GM12878 (cell line): ENCODE measurements at regions of chr14 and their contacts with region 1.

Region 1: DNA sequence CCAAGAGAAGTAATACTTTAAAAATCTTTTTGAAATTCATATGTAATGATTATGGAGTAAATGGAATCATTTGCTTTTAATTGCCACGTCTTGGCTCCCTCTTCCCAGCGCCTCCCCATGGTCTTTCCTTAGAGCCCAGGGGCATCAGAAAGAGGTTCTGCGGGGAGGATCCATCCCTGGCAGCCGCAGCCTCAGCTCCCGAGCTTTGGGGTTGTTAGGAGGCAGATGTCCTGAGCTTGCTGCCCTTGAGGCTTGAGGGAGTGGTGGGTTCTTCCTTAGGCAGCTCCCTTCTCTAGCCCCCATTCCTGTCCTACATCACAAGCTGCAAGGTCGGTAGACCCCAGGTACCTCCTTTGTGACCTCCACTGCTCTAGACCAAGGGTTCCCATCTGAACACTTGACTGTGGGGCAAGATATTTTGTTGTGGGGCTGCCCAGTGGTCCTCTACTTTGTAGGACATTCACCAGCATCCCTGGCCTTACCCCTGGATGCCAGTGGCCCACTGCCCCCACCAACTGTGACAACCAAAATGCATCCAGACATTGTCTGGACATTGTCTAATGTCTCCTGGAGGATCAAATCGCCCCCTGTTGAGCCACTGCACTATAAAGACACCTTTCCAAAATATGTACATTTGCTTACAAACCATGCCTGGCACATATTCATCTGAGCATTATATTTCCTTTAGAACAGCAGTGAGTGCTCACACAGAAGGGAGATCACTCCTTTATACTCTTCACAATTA is 6.3 kb downstream of the PPP2R5C start:
- DNase-seq: no peak
- ATAC-seq: no peak
- H3K4me3 ChIP-seq: no peak overlapping the region
- H3K27ac ChIP-seq: no peak overlapping the region
- H3K4me1 ChIP-seq: no peaks in the 10 kb centered on the region
- H3K27me3 ChIP-seq: no peaks in the 10 kb centered on the region; a peak in 1 of 4 replicates
- CTCF ChIP-seq: no peak
- EP300 ChIP-seq: no peak
- POLR2A ChIP-seq: no peak
- RAD21 ChIP-seq: no peak

Region 2: DNA sequence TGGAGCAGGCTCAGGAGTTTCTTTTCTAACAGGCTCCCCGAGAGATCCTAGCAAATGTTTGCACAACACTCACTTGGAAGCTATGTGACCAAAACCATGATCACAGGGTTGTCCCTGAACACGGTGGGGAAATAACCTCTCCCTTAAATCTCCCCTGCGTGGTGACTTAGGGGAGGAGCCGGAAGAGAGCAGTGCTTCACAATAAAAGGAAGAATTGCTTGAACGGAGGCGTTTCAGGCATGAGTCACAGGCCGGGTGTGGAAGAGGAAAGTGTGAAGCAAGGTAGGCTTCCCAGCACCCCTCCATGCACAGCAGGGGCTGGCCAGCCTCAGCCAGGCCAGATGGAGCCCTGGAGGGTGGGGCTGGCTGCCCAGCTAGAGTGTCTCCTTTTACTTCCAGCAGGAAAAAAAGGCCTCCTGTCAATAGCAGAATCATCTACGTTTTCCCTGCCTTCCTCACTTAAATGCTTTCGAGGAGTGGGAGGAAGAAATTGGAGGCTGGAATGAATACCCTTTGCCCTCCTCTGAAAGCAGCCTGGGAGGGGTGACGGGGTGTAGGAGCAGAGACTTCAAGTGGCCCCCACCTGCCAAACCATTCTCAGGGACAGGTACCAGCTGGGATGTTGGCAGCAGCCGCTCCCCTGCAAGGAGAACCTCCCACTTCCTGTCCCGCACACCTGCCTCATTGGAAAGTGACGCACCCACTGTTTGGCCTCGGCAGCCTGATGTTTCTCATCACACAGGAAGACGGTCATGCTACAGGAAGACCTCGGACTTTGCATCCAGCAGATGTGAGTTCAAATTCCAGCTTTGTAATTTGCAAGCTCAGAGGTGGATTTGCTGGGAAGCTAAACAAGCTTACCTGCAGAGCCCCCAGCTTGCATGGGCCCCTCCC is 36.4 kb before region 1 on chr14:
- CTCF ChIA-PET with region 1: interaction called, 12 read pairs
- POLR2A ChIA-PET with region 1: no interaction called
- RAD21 ChIA-PET with region 1: interaction called, 5 read pairs
- SMC1A ChIA-PET with region 1: interaction called, 6 read pairs
- in situ Hi-C with region 1: no loop called
- intact Hi-C with region 1: no loop called
- DNase-seq: peak; percentile 48
- ATAC-seq: peak; percentile 95
- H3K4me3 ChIP-seq: no peak overlapping the region
- H3K27ac ChIP-seq: peak overlapping the region; percentile 33
- H3K4me1 ChIP-seq: peaks cover 13% of the 10 kb centered on the region
- H3K27me3 ChIP-seq: no peaks in the 10 kb centered on the region
- CTCF ChIP-seq: peak in 1 of 3 experiments; percentile 24; a peak in 1 of 6 replicates
- EP300 ChIP-seq: 0 out of 4 replicates have a peak, but pooled peaks of 1 of the 2 experiments have one; percentile 11
- POLR2A ChIP-seq: no peak
- RAD21 ChIP-seq: peak; percentile 43; the same call in 1 of the 2 replicates

Region 3: GRCh38 chr14:101809671-101810514 is 42.1 kb after region 1 on chr14:
- CTCF ChIA-PET with region 1: interaction called, 30 read pairs
- POLR2A ChIA-PET with region 1: interaction called, 5 read pairs
- RAD21 ChIA-PET with region 1: interaction called, 16 read pairs
- SMC1A ChIA-PET with region 1: interaction called, 17 read pairs
- in situ Hi-C with region 1: no loop called
- intact Hi-C with region 1: no loop called
- DNase-seq: peak; percentile 88
- ATAC-seq: peak; percentile 92
- H3K4me3 ChIP-seq: peak overlapping the region; percentile 93
- H3K27ac ChIP-seq: peak overlapping the region; percentile 100
- H3K4me1 ChIP-seq: peaks cover 20% of the 10 kb centered on the region
- H3K27me3 ChIP-seq: no peaks in the 10 kb centered on the region
- CTCF ChIP-seq: no peak
- EP300 ChIP-seq: peak; percentile 61 to 82; a peak in 3 of 4 replicates
- POLR2A ChIP-seq: peak; percentile 86
- RAD21 ChIP-seq: no peak

Region 4: DNA sequence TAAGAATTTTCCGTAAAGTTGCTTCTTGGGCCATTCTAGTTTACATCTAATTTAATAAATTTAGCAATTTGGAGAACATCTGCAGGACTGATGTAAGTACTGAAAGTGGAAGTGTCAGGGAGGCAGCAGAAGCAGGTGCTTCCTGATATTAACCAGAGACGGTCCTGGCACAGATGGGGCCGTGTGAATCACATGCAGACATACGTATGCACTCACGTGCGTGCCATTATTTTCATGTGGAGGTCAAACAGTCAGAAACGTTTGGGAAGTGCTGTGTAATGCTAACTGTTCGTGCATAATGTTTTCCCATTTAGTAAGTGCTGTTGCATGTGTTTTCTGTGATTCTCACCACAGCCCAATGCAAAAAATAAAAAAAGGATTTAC is 108.8 kb after region 1 on chr14:
- CTCF ChIA-PET with region 1: interaction called, 5 read pairs
- POLR2A ChIA-PET with region 1: no interaction called
- RAD21 ChIA-PET with region 1: no interaction called
- SMC1A ChIA-PET with region 1: interaction called, 10 read pairs
- in situ Hi-C with region 1: no loop called
- intact Hi-C with region 1: no loop called
- DNase-seq: peak; percentile 75
- ATAC-seq: peak; percentile 93
- H3K4me3 ChIP-seq: peak overlapping the region; percentile 33
- H3K27ac ChIP-seq: peak overlapping the region; percentile 92
- H3K4me1 ChIP-seq: peaks cover 49% of the 10 kb centered on the region
- H3K27me3 ChIP-seq: no peaks in the 10 kb centered on the region
- CTCF ChIP-seq: no peak
- EP300 ChIP-seq: peak; percentile 92 to 99
- POLR2A ChIP-seq: no peak
- RAD21 ChIP-seq: no peak

Region 5: DNA sequence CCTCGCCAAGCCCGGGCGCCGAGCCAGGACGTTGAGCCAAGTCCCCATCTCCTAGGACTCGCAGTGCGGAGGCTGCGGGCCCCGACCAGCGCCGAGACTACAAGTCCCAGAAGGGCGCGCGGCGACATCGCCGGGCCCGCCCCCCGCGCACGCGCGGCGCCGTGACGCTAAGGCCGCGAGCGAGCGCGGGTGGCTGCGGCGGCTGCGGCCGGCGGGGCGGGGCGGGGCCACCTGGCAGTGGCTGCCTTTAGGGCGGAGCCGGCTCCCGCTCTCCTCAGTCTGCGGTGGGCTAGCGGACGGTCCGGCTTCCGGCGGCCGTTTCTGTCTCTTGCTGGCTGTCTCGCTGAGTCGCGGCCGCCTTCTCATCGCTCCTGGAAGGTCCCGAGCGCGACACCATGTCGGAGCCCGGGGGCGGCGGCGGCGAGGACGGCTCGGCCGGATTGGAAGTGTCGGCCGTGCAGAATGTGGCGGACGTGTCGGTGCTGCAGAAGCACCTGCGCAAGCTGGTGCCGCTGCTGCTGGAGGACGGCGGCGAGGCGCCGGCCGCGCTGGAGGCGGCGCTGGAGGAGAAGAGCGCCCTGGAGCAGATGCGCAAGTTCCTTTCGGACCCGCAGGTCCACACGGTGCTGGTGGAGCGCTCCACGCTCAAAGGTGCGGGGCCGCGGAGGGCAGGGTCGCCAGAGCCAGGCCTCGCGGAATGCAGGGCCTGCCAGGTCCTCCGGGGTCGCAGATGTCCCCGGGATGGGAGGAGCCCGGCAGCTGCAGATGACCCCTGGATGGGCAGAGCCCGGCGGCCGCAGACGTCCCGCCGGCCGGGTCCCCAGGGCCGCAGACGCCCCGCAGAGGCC is 196.7 kb after region 1 on chr14 and contains the start of gene DYNC1H1:
- CTCF ChIA-PET with region 1: interaction called, 19 read pairs
- POLR2A ChIA-PET with region 1: no interaction called
- RAD21 ChIA-PET with region 1: interaction called, 3 read pairs
- SMC1A ChIA-PET with region 1: interaction called, 28 read pairs
- in situ Hi-C with region 1: no loop called
- intact Hi-C with region 1: loop called (anchors 5 kb)
- DNase-seq: peak; percentile 27
- ATAC-seq: peak; percentile 87
- H3K4me3 ChIP-seq: peak within 1 kb of the TSS; percentile 79
- H3K27ac ChIP-seq: peak within 1 kb of the TSS; percentile 78
- H3K4me1 ChIP-seq: peaks cover 4% of the 10 kb centered on the region
- H3K27me3 ChIP-seq: no peaks in the 10 kb centered on the region
- CTCF ChIP-seq: no peak
- EP300 ChIP-seq: no peak
- POLR2A ChIP-seq: peak; percentile 97
- RAD21 ChIP-seq: no peak
- polyA plus RNA-seq, gene DYNC1H1: 38.4 to 54.0 TPM